Transverse colon (tissue), 4 donors: ENCODE measurements at regions of chr2 and their contacts with region 1.

Region 1: DNA sequence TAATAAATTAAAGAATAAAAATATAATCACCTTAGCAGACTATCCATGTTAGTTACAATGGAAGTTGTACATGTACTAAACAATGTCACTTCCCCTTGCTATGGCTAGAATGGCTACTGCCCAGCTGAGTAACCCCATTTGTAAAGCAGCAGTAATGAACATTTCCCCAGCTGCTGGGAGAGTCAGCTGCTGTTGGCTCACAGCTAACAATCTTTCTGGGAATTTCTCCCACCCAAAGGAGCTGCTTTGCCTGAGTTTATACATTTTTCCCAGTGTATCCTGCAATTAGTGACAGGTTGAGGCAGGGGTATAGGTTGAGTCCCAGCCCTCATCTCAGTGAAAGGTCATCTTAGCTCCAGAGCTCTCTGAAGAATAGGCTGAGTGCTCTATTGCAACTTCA is 665.6 kb upstream of the KLHL29 start:
- DNase-seq: no peak
- H3K4me3 ChIP-seq: no peak overlapping the region
- H3K27ac ChIP-seq: no peak overlapping the region
- H3K4me1 ChIP-seq: no peaks in the 10 kb centered on the region
- H3K27me3 ChIP-seq: no peaks in the 10 kb centered on the region
- CTCF ChIP-seq: no peak
- EP300 ChIP-seq: no peak
- POLR2A ChIP-seq: no peak

Region 2: DNA sequence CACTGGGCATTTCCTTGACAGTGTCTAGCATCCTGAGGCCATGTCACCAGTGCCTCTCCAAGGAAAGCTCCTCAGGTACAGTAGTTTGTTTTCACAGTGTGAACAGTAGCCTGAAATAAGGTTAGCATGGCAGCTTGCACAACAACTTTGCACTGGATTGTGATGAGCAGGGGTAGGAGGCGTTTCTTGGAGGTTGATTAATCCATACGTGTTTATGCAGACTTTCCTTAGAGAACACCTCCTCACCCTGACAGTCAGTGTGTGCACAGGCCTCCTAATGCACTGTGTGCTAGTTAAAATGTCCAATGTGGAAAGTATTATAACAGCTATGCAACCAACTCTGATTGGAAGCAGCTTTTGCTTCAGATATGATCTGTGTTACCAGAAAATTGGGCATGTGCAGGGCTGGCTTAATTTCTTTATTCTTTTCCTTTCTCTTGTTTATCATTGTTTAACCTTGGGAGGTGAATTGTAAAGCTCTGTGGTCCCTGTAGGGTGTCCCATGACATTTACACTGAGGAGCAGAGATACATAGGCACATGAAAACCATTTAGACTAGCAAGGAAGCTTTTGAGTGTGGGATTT is 1819.3 kb before region 1 on chr2:
- in situ Hi-C with region 1: no loop called
- intact Hi-C with region 1: loop called (anchors 5 kb)
- DNase-seq: no peak
- H3K4me3 ChIP-seq: no peak overlapping the region
- H3K27ac ChIP-seq: no peak overlapping the region
- H3K4me1 ChIP-seq: no peaks in the 10 kb centered on the region
- H3K27me3 ChIP-seq: no peaks in the 10 kb centered on the region
- CTCF ChIP-seq: no peak
- EP300 ChIP-seq: no peak
- POLR2A ChIP-seq: no peak